ENCODE measurements at regions of chr12 and their contacts with region 1.

Region 1: DNA sequence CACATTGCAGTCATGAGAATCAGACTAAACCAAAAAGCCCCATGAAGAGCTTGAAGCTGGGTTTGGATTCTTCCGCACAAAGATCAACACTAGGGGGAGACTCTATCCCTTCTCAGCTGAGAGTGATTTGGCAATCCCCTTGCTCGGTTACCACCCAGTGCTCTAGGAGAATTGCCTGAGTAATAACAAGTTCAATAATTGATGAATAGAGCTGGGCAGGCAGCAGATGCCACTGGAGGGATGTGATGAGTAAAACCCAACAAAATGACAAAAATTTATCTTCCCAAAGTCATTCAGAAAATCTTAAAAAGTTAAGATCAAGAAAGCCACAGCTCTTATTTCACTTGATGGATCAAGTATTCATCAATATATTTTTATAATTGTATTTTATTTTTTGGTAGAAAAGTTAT is 185.6 kb upstream of the ARID2 start:
- DNase-seq: peak; percentile 82
- ATAC-seq: peak; percentile 90
- H3K4me3 ChIP-seq: no peak overlapping the region
- H3K4me3 Mint-ChIP-seq: no peak overlapping the region
- H3K27ac ChIP-seq: no peak overlapping the region
- H3K27ac Mint-ChIP-seq: no peak overlapping the region
- H3K4me1 ChIP-seq: no peaks in the 10 kb centered on the region
- H3K4me1 Mint-ChIP-seq: peaks cover 4% of the 10 kb centered on the region
- H3K27me3 ChIP-seq: no peaks in the 10 kb centered on the region
- H3K27me3 Mint-ChIP-seq: no peaks in the 10 kb centered on the region
- CTCF ChIP-seq: peak; percentile 84

Region 2: DNA sequence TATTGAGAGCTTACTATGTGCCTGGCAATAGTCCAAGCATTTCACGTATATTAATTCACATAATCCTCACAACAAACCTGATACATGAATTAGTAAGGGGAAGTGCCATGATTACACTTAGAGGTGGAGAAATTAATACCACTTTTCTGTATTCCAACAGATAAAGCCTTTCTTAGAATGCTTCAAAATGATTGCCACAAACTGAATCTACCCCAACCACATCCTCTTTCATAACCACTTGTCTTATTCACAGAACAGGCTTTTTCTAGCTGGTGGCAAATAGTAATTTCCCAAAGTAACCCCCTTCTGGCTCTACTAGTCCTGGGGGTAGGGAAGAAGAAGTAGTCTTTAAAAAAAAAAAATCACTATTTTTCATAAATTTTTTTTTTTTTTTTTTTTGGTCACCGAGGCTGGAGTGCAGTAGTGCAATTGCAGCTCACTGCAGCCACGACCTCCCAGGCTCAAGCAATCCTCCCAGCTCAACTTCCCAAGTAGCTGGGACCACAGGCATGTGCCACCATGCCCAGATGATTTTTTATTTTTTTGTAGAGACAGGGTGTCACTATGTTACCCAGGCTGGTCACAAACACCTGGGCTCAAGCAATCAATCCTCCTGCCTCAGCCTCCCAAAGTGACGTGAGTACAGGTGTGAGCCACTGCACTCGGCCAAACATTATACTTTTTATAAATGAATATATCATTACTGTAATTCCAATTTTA is 126.6 kb after region 1 on chr12:
- CTCF ChIA-PET with region 1: interaction called, 14 read pairs
- POLR2A ChIA-PET with region 1: no interaction called
- intact Hi-C with region 1: no loop called
- DNase-seq: peak; percentile 55
- ATAC-seq: peak; percentile 55
- H3K4me3 ChIP-seq: no peak overlapping the region
- H3K4me3 Mint-ChIP-seq: peak overlapping the region; percentile 2
- H3K27ac ChIP-seq: no peak overlapping the region
- H3K27ac Mint-ChIP-seq: no peak overlapping the region
- H3K4me1 ChIP-seq: peaks cover 27 to 28% of the 10 kb centered on the region in 2 donors
- H3K4me1 Mint-ChIP-seq: peaks cover 23% of the 10 kb centered on the region
- H3K27me3 ChIP-seq: no peaks in the 10 kb centered on the region
- H3K27me3 Mint-ChIP-seq: no peaks in the 10 kb centered on the region
- CTCF ChIP-seq: no peak

Region 3: DNA sequence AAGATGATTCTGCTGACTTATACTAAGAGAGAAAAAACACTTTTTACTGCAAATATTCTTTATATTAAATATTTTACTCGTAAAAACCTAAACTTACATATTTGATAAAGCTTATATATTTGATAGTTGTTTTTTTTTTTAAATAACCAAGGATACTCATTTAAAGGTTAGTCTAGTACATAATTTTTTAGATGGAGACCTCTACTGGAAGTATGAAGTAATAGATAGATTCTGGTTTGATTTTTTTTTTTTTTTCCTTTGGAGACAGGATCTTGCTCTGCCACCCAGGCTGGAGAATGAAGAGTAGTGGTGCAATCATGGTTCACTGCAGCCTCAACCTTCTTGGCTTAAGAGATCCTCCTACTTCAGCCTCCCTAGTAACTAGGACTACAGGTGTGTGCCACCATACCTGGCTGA is 202.0 kb after region 1 on chr12:
- CTCF ChIA-PET with region 1: interaction called, 135 read pairs
- POLR2A ChIA-PET with region 1: no interaction called
- intact Hi-C with region 1: loop called (anchors 1 kb)
- DNase-seq: peak; percentile 38
- ATAC-seq: peak; percentile 49
- H3K4me3 ChIP-seq: no peak overlapping the region
- H3K4me3 Mint-ChIP-seq: no peak overlapping the region
- H3K27ac ChIP-seq: no peak overlapping the region
- H3K27ac Mint-ChIP-seq: no peak overlapping the region
- H3K4me1 ChIP-seq: peaks cover 0 to 4% of the 10 kb centered on the region in 2 donors
- H3K4me1 Mint-ChIP-seq: peaks cover 11% of the 10 kb centered on the region
- H3K27me3 ChIP-seq: no peaks in the 10 kb centered on the region
- H3K27me3 Mint-ChIP-seq: no peaks in the 10 kb centered on the region
- CTCF ChIP-seq: peak; percentile 66

Region 4: GRCh38 chr12:45893240-45893639 is 349.3 kb after region 1 on chr12:
- CTCF ChIA-PET with region 1: interaction called, 3 read pairs
- POLR2A ChIA-PET with region 1: no interaction called
- intact Hi-C with region 1: loop called (anchors 10 kb)
- DNase-seq: no peak
- ATAC-seq: no peak
- H3K4me3 ChIP-seq: no peak overlapping the region
- H3K4me3 Mint-ChIP-seq: no peak overlapping the region
- H3K27ac ChIP-seq: no peak overlapping the region
- H3K27ac Mint-ChIP-seq: no peak overlapping the region
- H3K4me1 ChIP-seq: no peaks in the 10 kb centered on the region
- H3K4me1 Mint-ChIP-seq: peaks cover 1% of the 10 kb centered on the region
- H3K27me3 ChIP-seq: no peaks in the 10 kb centered on the region
- H3K27me3 Mint-ChIP-seq: no peaks in the 10 kb centered on the region
- CTCF ChIP-seq: peak; percentile 14

Region 5: DNA sequence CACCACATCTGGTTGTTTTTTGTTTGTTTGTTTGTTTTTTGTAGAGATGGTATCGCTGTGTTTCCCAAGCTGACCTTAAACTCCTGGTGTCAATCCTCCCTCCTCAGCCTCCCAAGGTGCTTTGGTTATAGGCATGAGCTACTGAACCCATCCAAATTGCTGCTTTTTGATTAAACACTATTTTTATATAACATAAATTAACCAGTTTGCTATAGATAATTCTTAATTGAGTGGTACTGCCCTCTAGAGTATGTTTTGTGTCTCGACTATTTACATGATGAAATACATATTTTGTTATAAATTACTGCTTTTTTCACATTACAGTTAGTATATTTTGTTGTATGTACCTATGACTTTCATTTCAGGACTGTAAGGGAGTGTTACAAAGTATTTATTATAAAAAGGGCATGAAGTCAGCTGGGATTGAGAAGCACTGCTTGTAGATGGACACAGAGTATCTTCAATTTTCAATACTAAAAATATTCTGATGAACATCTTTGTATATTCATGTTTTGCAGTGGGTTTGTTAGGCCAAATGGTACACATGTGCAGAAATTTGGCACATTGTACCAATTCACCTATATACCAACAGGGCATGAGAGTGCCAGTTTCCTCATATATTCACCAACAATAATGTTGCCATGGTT is 461.4 kb after region 1 on chr12:
- CTCF ChIA-PET with region 1: interaction called, 10 read pairs
- POLR2A ChIA-PET with region 1: no interaction called
- intact Hi-C with region 1: loop called (anchors 10 kb)
- DNase-seq: peak; percentile 18
- ATAC-seq: no peak
- H3K4me3 ChIP-seq: no peak overlapping the region
- H3K4me3 Mint-ChIP-seq: no peak overlapping the region
- H3K27ac ChIP-seq: no peak overlapping the region
- H3K27ac Mint-ChIP-seq: no peak overlapping the region
- H3K4me1 ChIP-seq: no peaks in the 10 kb centered on the region
- H3K4me1 Mint-ChIP-seq: no peaks in the 10 kb centered on the region
- H3K27me3 ChIP-seq: no peaks in the 10 kb centered on the region
- H3K27me3 Mint-ChIP-seq: no peaks in the 10 kb centered on the region
- CTCF ChIP-seq: peak; percentile 54